ENCODE measurements at regions of chr5 and their contacts with region 1.

Region 1: DNA sequence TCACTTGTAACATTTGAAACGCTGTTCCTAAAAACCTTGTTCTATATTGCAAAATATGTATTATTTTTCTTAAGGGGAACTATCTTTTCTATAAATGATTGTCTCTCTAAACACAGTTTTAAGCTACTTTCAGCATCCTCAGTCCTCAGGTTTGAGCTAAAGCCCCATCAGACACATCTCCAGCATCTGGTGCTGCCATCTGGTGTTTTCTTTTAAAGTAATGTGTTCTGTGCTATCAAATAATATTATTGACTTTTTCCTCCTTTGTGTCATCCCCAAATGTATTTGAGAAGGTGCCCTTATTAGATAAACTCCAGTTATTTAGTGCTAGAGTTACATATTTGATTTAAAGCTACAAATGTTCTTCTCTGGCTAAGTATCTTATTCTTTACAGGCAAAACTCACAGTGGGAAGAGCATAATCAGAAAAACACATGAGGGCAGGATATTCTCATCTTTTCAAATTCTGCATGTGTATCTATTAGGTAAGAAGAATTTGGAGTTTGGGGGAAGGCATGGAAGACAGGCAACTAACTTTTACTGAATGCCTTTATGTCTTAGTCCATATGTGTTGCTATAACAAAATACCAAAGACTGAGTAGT is 27.5 kb downstream of the ZNF474 start:
- DNase-seq: peak; percentile 73
- H3K4me3 Mint-ChIP-seq: no peak overlapping the region
- H3K27ac Mint-ChIP-seq: no peak overlapping the region
- H3K4me1 Mint-ChIP-seq: peaks cover 12% of the 10 kb centered on the region
- H3K27me3 Mint-ChIP-seq: no peaks in the 10 kb centered on the region
- CTCF ChIP-seq: peak; percentile 70

Region 2: DNA sequence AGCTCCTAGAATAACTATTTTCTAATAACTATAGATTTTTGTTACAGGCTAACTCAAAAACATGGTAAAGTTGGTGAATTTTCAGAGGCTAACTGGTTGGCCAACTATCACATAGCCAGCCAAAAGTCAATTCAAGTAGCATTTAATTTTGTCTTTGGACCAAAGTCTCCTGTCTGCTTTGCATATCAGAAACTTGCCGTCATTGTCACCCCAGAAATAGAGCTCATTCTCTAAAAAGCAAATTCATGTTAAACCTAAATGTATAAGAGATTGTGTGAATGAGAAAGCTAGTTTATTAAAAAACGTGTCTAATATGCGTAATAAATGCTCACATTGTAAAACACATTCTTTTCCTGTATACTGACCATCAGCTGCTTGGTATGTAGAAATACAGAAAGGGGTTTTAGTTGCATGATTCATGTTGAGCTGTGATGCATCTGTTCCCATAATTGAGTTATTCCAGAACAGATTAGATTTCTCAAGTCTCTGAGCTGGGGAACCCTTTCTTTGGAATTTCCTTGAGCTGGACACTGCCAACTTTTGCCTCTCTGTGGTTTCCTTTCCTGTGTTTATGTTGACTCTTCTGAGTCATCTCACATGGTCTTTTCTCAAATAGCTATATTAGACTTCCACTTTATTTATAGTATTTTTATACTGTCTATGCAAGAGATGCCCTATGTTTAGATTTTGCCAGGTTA is 187.8 kb before region 1 on chr5:
- CTCF ChIA-PET with region 1: interaction called, 37 read pairs
- POLR2A ChIA-PET with region 1: interaction called, 23 read pairs
- intact Hi-C with region 1: loop called (anchors 1 kb)
- DNase-seq: peak; percentile 99
- H3K4me3 Mint-ChIP-seq: peak overlapping the region; percentile 38
- H3K27ac Mint-ChIP-seq: peak overlapping the region; percentile 80
- H3K4me1 Mint-ChIP-seq: peaks cover 15% of the 10 kb centered on the region
- H3K27me3 Mint-ChIP-seq: no peaks in the 10 kb centered on the region
- CTCF ChIP-seq: no peak

Region 3: GRCh38 chr5:122101636-122102285 is 55.1 kb before region 1 on chr5:
- CTCF ChIA-PET with region 1: interaction called, 237 read pairs
- POLR2A ChIA-PET with region 1: interaction called, 19 read pairs
- intact Hi-C with region 1: loop called (anchors 2 kb)
- DNase-seq: peak; percentile 76
- H3K4me3 Mint-ChIP-seq: no peak overlapping the region
- H3K27ac Mint-ChIP-seq: peak overlapping the region; percentile 35
- H3K4me1 Mint-ChIP-seq: peaks cover 19% of the 10 kb centered on the region
- H3K27me3 Mint-ChIP-seq: no peaks in the 10 kb centered on the region
- CTCF ChIP-seq: peak; percentile 67

Region 4: GRCh38 chr5:122120957-122121356 is 35.9 kb before region 1 on chr5:
- CTCF ChIA-PET with region 1: interaction called, 55 read pairs
- POLR2A ChIA-PET with region 1: interaction called, 21 read pairs
- intact Hi-C with region 1: no loop called
- DNase-seq: peak; percentile 71
- H3K4me3 Mint-ChIP-seq: peak overlapping the region; percentile 45
- H3K27ac Mint-ChIP-seq: peak overlapping the region; percentile 90
- H3K4me1 Mint-ChIP-seq: peaks cover 30% of the 10 kb centered on the region
- H3K27me3 Mint-ChIP-seq: no peaks in the 10 kb centered on the region
- CTCF ChIP-seq: no peak

Region 5: DNA sequence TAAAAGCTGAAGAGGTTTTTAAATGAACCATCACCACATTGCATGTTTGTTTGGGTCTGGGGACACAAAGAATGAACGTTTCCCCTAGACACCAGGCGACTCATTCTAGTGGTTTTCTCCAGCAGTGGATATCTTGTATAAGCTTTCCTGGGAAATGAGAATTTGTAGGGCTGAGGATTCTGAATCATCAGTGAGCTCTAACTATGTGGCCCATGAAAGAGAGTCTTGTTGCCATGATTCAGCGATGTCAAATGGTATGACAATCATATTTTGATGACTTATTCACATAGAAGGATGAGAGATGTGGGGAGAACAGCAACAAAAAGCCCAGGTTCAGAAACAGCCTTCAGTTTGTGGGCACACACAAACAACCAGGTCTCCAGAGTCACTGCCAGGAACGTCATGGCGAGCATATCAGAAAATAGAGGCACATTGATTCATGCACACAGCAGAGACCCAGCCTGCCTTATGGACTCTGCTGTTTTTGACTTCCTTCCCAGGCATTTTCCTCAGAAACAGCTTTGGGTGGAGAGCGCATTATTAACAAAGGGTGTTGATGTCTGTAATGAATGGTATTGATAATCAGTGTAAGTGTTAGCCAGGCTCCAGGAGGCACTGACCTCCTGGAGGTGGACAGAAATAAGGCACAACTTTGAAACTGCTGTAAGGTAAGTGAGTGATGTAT is 14.2 kb before region 1 on chr5:
- CTCF ChIA-PET with region 1: interaction called, 118 read pairs
- POLR2A ChIA-PET with region 1: interaction called, 6 read pairs
- intact Hi-C with region 1: no loop called
- DNase-seq: peak; percentile 39
- H3K4me3 Mint-ChIP-seq: no peak overlapping the region
- H3K27ac Mint-ChIP-seq: peak overlapping the region; percentile 32
- H3K4me1 Mint-ChIP-seq: peaks cover 12% of the 10 kb centered on the region
- H3K27me3 Mint-ChIP-seq: no peaks in the 10 kb centered on the region
- CTCF ChIP-seq: no peak